H1 (cell line): ENCODE measurements at regions of chr14 and their contacts with region 1.

Region 1: GRCh38 chr14:102878174-102878969 is 44.1 kb upstream of the AMN start:
- DNase-seq: no peak
- H3K4me3 ChIP-seq: no peak overlapping the region
- H3K27ac ChIP-seq: peak overlapping the region; percentile 18; the same call in 1 of the 2 replicates
- H3K4me1 ChIP-seq: peaks cover 0 to 2% (median 0%) of the 10 kb centered on the region in 4 experiments; a peak in 1 of 7 replicates
- H3K27me3 ChIP-seq: no peaks in the 10 kb centered on the region
- CTCF ChIP-seq: peak; percentile 38 to 57 (median 49)
- EP300 ChIP-seq: no peak
- POLR2A ChIP-seq: no peak
- RAD21 ChIP-seq: peak; percentile 2 to 43; a peak in 2 of 4 replicates

Region 2: GRCh38 chr14:102804858-102805257 is 73.5 kb before region 1 on chr14:
- CTCF ChIA-PET with region 1: no interaction called
- POLR2A ChIA-PET with region 1: no interaction called
- DNase-seq: no peak
- H3K4me3 ChIP-seq: no peak overlapping the region
- H3K27ac ChIP-seq: no peak overlapping the region
- H3K4me1 ChIP-seq: peaks cover 3 to 13% (median 8%) of the 10 kb centered on the region in 4 experiments; a peak in 5 of 7 replicates
- H3K27me3 ChIP-seq: no peaks in the 10 kb centered on the region
- CTCF ChIP-seq: no peak
- EP300 ChIP-seq: no peak
- POLR2A ChIP-seq: no peak
- RAD21 ChIP-seq: no peak

Region 3: DNA sequence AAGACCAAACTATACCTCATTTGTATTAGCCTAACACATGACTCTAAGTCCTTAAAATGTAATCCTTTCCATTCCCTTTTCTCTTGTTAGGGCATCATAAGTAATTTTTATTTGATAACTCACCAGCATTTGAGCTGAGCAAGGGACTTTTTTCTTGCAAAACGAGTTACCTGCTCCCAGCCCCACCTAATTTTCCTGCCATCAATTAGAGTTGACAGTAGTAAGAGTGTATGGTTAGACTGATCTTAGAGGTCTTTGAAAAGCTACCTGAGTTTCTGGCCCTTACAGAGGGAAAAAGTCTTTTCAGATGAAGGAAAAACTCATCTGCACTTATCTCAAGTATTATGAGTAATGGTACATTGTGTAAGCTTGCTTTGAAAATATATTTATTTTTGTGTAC is 10.4 kb after region 1 on chr14:
- CTCF ChIA-PET with region 1: interaction called, 14 read pairs
- POLR2A ChIA-PET with region 1: no interaction called
- DNase-seq: no peak
- H3K4me3 ChIP-seq: no peak overlapping the region
- H3K27ac ChIP-seq: no peak overlapping the region
- H3K4me1 ChIP-seq: 0 out of 7 replicates have a peak, but pooled peaks cover 0 to 4% (median 0%) of the 10 kb centered on the region in 4 experiments
- H3K27me3 ChIP-seq: no peaks in the 10 kb centered on the region
- CTCF ChIP-seq: no peak
- EP300 ChIP-seq: no peak
- POLR2A ChIP-seq: no peak
- RAD21 ChIP-seq: no peak

Region 4: DNA sequence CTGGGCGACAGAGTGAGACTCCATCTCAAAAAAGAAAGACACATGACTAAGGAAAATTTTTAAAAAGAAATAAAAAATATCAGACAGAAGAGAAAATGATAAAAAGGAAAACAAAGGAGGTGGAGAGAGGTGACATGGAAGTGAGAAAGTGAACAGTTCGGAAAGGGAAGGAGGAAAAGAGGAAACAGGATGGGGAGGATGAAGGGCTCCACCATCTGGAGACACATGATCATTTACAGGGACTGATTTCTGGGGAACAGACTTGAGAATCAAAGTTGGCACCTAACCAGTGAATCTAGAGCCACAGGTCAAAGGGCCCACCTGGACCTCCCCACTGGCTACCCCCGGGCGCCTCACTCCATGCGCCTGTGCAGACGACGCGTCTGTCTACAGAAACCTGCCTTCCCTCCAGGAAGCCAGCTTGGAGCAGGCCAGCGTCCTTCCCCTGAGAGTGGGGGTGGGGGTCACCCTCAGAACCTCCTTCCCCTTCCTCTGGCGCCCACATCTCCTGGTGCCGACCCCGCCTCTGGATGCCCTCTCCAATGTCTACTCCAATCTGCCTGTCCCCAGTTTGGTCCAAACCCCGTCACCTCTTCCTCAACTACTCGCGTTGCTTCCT is 104.6 kb after region 1 on chr14:
- CTCF ChIA-PET with region 1: no interaction called
- POLR2A ChIA-PET with region 1: no interaction called
- DNase-seq: no peak
- H3K4me3 ChIP-seq: no peak overlapping the region
- H3K27ac ChIP-seq: no peak overlapping the region
- H3K4me1 ChIP-seq: no peaks in the 10 kb centered on the region
- H3K27me3 ChIP-seq: no peaks in the 10 kb centered on the region
- CTCF ChIP-seq: peak in 1 of 3 experiments; percentile 14; a peak in 1 of 4 replicates
- EP300 ChIP-seq: no peak
- POLR2A ChIP-seq: no peak
- RAD21 ChIP-seq: peak in 1 of 2 experiments; percentile 19; a peak in 3 of 4 replicates